Vagina (tissue), 2 donors: ENCODE measurements at regions of chr1 and their contacts with region 1.

Region 1: DNA sequence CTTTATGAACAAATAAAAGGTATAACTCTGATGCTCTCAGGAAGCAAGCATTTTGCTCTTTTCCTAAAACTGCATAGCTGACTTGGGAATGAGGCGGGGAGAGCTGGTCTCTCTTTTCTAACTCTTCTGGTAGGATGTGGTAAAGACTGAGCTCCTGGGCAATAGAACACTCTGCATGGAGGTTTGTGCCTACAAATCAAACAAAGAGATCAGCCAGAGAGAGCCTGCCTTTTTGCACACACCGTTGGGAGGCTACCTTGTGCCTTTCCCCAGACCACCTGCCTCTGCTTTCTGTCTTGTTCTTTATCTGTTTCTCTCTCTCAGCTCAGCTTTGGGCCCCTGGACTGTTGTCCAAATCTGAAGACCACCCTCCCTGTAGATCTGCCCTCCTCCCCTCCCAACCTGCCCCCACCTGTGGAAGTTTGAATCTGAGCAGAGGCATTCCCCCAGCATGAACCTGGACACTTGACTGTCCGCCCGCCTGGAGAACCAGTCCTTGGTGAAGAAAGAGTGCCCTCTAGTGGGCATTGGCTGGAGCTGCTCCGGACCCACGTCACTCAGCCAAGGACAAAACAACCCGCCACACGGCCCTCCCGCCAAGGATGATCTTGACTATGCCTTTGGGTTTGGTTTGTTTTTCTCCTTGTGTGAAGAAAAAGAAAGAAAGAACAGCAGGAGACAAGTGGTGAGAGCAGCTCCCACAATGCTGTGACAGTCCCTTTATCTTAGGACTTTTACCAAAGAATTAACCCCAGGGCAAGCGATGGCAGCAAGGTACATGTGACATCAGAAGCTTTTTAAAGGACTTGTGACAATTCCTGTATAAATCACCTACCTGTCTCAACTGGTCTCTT is 228.2 kb downstream of the PBX1 start:
- DNase-seq: no peak
- H3K4me3 ChIP-seq: peak overlapping the region in 1 of 2 donors; percentile 2
- H3K27ac ChIP-seq: peak overlapping the region; percentile 77
- H3K4me1 ChIP-seq: peaks cover 86% of the 10 kb centered on the region
- H3K27me3 ChIP-seq: no peaks in the 10 kb centered on the region
- CTCF ChIP-seq: peak; percentile 48 to 90 (median 83)
- POLR2A ChIP-seq: no peak

Region 2: DNA sequence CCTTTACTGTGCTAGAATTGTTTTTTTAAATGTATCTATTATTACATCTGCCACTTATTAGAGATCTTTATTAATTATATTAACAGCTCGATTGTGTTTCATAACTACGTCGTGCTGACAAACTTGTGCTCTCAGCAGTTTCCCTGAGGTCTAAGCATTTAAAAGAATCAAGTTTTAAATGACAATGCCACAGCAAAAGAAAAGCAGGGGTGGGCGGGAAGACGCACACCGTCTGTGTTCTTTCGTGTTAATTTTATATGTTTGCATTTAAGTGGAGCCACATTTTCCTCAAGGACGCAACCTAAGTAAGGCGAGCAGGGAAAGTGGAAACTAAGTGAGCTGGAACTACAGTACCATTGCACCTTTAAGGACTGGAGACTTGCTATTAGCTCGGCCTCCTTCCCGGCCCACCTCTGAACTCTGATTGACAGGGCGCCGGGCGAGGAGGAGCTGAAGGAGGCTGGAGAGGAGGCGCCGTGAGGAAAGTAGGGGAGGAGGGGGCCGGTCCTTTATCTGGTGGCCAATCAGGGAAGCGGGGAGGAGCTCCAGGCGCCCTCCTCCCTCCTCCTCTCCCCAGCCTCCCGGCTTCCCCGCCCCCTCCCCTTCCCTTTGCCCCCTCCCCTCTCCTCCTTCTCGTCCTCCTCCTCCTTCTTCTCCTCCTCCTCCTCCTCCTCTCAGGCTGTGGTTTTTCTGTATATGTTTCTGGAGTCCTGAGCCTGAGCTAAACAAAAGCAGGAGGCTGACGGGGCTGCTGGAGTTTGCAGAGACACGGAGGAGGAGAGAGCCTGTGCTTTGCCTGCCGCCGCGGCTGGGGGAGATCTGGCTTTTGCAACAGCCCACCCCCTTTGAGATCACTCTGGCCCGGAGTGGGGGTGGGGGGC is 228.5 kb before region 1 on chr1 and contains the start of gene PBX1:
- intact Hi-C with region 1: loop called (anchors 5 kb)
- DNase-seq: peak; percentile 98 to 100
- H3K4me3 ChIP-seq: peak within 1 kb of the TSS; percentile 82 to 91
- H3K27ac ChIP-seq: peak within 1 kb of the TSS; percentile 95
- H3K4me1 ChIP-seq: peaks cover 17% of the 10 kb centered on the region
- H3K27me3 ChIP-seq: no peaks in the 10 kb centered on the region
- CTCF ChIP-seq: no peak
- POLR2A ChIP-seq: peak in 1 of 2 donors; percentile 97
- total RNA-seq, gene PBX1: 69.0 TPM